ENCODE measurements at regions of chr1 and their contacts with region 1.

Region 1: GRCh38 chr1:91021686-91022517 is at the start of gene ZNF644:
- DNase-seq: peak; percentile 97
- H3K4me3 Mint-ChIP-seq: peak within 1 kb of the TSS; percentile 91
- H3K27ac Mint-ChIP-seq: peak within 1 kb of the TSS; percentile 96
- H3K4me1 Mint-ChIP-seq: peaks cover 72% of the 10 kb centered on the region
- H3K27me3 Mint-ChIP-seq: no peaks in the 10 kb centered on the region
- total RNA-seq, gene ZNF644: 42.4 to 42.8 TPM

Region 2: GRCh38 chr1:89994805-89995597 is 1026.9 kb before region 1 on chr1 and contains the start of gene ZNF326:
- CTCF ChIA-PET with region 1: no interaction called
- intact Hi-C with region 1: loop called (anchors 2 kb)
- DNase-seq: peak; percentile 94
- H3K4me3 Mint-ChIP-seq: peak within 1 kb of the TSS; percentile 96
- H3K27ac Mint-ChIP-seq: peak within 1 kb of the TSS; percentile 90
- H3K4me1 Mint-ChIP-seq: peaks cover 42% of the 10 kb centered on the region
- H3K27me3 Mint-ChIP-seq: no peaks in the 10 kb centered on the region
- total RNA-seq, gene ZNF326: 17.4 to 17.9 TPM

Region 3: DNA sequence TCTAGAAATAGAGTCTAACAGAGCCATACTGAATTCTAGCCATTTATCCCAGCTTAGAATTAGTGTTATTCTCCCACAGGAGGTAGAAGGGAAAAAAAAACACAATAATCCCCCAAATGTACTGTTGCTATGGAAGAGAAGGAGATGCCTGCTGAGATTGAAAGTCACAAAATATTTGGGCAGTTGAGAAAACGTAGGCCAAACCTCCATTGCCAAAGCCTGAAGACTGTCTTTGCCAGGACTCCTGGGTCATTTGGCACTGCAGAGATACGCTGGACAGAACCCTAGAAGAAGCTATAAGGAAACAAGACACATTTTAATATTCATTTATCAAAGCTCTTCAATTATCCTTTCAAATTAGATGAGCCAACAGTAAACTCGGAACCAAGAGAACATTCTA is 327.1 kb before region 1 on chr1:
- CTCF ChIA-PET with region 1: no interaction called
- intact Hi-C with region 1: no loop called
- DNase-seq: no peak
- H3K4me3 Mint-ChIP-seq: no peak overlapping the region
- H3K27ac Mint-ChIP-seq: no peak overlapping the region
- H3K4me1 Mint-ChIP-seq: no peaks in the 10 kb centered on the region
- H3K27me3 Mint-ChIP-seq: peaks cover 18% of the 10 kb centered on the region

Region 4: GRCh38 chr1:90919900-90920299 is 102.0 kb before region 1 on chr1:
- CTCF ChIA-PET with region 1: no interaction called
- intact Hi-C with region 1: loop called (anchors 2 kb)
- DNase-seq: no peak
- H3K4me3 Mint-ChIP-seq: no peak overlapping the region
- H3K27ac Mint-ChIP-seq: no peak overlapping the region
- H3K4me1 Mint-ChIP-seq: peaks cover 49% of the 10 kb centered on the region
- H3K27me3 Mint-ChIP-seq: no peaks in the 10 kb centered on the region

Region 5: GRCh38 chr1:91165033-91165654 is 143.2 kb after region 1 on chr1:
- CTCF ChIA-PET with region 1: interaction called, 5 read pairs
- intact Hi-C with region 1: loop called (anchors 1 kb)
- DNase-seq: peak; percentile 85
- H3K4me3 Mint-ChIP-seq: no peak overlapping the region
- H3K27ac Mint-ChIP-seq: no peak overlapping the region
- H3K4me1 Mint-ChIP-seq: no peaks in the 10 kb centered on the region
- H3K27me3 Mint-ChIP-seq: no peaks in the 10 kb centered on the region

Region 6: DNA sequence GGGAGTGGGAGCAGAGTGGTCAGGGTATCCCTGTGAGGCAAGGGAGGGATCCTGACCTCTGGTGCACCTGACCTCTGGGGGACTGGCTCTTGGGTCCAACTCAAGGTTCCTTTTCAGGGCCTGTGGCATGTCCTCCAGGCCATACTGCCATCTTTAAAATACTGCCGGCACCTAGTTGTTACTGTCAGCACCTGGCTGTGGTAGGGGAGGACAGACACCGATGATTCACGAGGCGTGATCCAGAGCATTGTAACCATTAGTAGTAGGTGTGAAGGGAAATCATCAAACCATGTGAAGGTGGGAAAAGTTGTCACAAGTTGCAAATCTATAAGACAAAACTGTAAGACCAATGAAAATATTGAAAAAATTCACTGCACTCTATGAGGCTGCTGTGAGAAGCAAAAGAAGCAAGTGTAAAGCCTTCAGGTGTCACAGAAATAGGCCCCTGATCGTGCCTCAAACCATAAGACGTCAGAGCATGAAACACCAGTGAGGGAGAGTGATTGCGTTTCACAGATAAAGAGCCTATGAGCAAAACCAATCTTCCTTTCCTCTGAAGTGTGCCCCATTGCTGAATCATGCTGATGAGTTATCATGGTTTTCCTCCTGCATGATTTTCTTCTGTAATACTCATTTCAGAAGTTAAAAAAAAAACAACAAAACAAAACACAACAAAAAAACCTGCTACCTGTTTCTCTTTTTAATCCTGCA is 534.1 kb after region 1 on chr1:
- CTCF ChIA-PET with region 1: no interaction called
- intact Hi-C with region 1: loop called (anchors 5 kb)
- DNase-seq: peak; percentile 84
- H3K4me3 Mint-ChIP-seq: peak overlapping the region; percentile 26
- H3K27ac Mint-ChIP-seq: peak overlapping the region; percentile 90
- H3K4me1 Mint-ChIP-seq: peaks cover 68% of the 10 kb centered on the region
- H3K27me3 Mint-ChIP-seq: no peaks in the 10 kb centered on the region

Region 7: DNA sequence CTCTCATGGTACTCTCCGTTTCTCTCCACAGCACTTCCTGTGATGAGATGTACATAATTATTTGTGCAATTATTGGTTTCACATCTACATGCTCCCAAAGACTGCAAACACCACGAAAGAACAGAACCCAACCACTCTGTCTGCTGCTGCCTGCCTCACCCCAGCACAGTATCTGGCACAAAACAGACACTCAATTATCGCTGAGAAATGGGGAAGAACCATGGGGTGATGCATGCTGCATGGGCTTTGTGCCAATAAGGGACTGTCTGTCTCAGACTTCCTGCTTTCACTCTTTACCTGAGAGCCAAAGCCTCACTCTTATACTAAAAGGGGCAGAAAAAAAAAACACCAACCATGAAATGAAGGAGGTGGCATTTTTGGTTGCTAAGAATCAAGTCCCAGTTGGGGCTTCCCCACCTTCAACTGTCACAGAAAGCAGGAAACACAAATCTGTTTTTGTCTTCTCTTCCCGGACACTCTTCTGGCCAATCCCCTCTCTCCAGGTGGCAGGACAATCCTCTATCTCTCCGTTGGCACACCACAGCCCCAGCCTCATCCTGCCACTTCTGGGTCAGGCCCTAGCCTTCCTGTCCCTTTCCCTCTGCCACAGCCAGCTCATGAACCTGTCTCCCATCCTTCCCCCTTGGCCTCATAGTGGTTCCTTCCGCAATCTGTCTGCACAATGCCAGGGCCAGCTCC is 782.1 kb after region 1 on chr1:
- CTCF ChIA-PET with region 1: no interaction called
- intact Hi-C with region 1: loop called (anchors 1 kb)
- DNase-seq: peak; percentile 92
- H3K4me3 Mint-ChIP-seq: peak overlapping the region; percentile 60
- H3K27ac Mint-ChIP-seq: peak overlapping the region; percentile 98
- H3K4me1 Mint-ChIP-seq: peaks cover 31% of the 10 kb centered on the region
- H3K27me3 Mint-ChIP-seq: no peaks in the 10 kb centered on the region

Region 8: GRCh38 chr1:92980732-92981647 is 1959.1 kb after region 1 on chr1:
- CTCF ChIA-PET with region 1: no interaction called
- intact Hi-C with region 1: loop called (anchors 10 kb)
- DNase-seq: peak; percentile 55
- H3K4me3 Mint-ChIP-seq: peak overlapping the region; percentile 70
- H3K27ac Mint-ChIP-seq: peak overlapping the region; percentile 98
- H3K4me1 Mint-ChIP-seq: peaks cover 60% of the 10 kb centered on the region
- H3K27me3 Mint-ChIP-seq: no peaks in the 10 kb centered on the region